PC-3 (cell line): ENCODE measurements at regions of chr18 and their contacts with region 1.

Region 1: GRCh38 chr18:70082430-70082829 is 123.1 kb downstream of the RTTN start:
- DNase-seq: no peak
- ATAC-seq: no peak
- H3K4me3 ChIP-seq: no peak overlapping the region
- H3K27ac ChIP-seq: no peak overlapping the region
- H3K4me1 ChIP-seq: no peaks in the 10 kb centered on the region
- H3K27me3 ChIP-seq: no peaks in the 10 kb centered on the region
- CTCF ChIP-seq: no peak

Region 2: GRCh38 chr18:68847219-68847837 is 1235.1 kb before region 1 on chr18:
- CTCF ChIA-PET with region 1: no interaction called
- POLR2A ChIA-PET with region 1: no interaction called
- intact Hi-C with region 1: loop called (anchors 1 kb)
- DNase-seq: peak; percentile 44
- ATAC-seq: no peak
- H3K4me3 ChIP-seq: no peak overlapping the region
- H3K27ac ChIP-seq: no peak overlapping the region
- H3K4me1 ChIP-seq: no peaks in the 10 kb centered on the region
- H3K27me3 ChIP-seq: no peaks in the 10 kb centered on the region
- CTCF ChIP-seq: peak; percentile 80

Region 3: GRCh38 chr18:68854786-68855391 is 1227.5 kb before region 1 on chr18:
- CTCF ChIA-PET with region 1: no interaction called
- POLR2A ChIA-PET with region 1: no interaction called
- intact Hi-C with region 1: loop called (anchors 2 kb)
- DNase-seq: no peak
- ATAC-seq: no peak
- H3K4me3 ChIP-seq: no peak overlapping the region
- H3K27ac ChIP-seq: no peak overlapping the region
- H3K4me1 ChIP-seq: no peaks in the 10 kb centered on the region
- H3K27me3 ChIP-seq: no peaks in the 10 kb centered on the region
- CTCF ChIP-seq: no peak

Region 4: GRCh38 chr18:69469444-69469919 is 612.9 kb before region 1 on chr18:
- CTCF ChIA-PET with region 1: interaction called, 3 read pairs
- POLR2A ChIA-PET with region 1: no interaction called
- intact Hi-C with region 1: loop called (anchors 2 kb)
- DNase-seq: peak; percentile 78
- ATAC-seq: peak; percentile 94
- H3K4me3 ChIP-seq: peak overlapping the region; percentile 59
- H3K27ac ChIP-seq: no peak overlapping the region
- H3K4me1 ChIP-seq: no peaks in the 10 kb centered on the region
- H3K27me3 ChIP-seq: no peaks in the 10 kb centered on the region
- CTCF ChIP-seq: peak; percentile 79

Region 5: DNA sequence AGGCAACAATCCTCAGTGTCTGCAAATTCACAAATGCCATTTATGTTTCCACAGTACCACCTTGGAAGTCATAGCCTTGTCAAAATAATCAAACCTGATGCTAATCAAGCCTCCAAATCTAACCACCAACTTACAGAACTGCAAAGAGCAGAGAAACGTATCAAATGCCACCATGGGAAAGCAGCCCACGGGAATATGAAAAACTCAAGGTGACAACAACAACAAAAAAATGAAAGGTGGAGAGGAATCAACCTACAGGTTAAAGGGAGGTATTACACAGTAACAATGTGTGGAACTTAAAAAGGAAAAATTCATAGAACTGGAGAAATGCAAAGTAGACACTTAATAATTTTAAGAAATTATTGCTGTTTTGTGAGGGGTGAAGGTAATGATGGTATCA is 181.5 kb before region 1 on chr18:
- CTCF ChIA-PET with region 1: no interaction called
- POLR2A ChIA-PET with region 1: no interaction called
- intact Hi-C with region 1: no loop called
- DNase-seq: no peak
- ATAC-seq: no peak
- H3K4me3 ChIP-seq: no peak overlapping the region
- H3K27ac ChIP-seq: no peak overlapping the region
- H3K4me1 ChIP-seq: no peaks in the 10 kb centered on the region
- H3K27me3 ChIP-seq: no peaks in the 10 kb centered on the region
- CTCF ChIP-seq: peak; percentile 37

Region 6: DNA sequence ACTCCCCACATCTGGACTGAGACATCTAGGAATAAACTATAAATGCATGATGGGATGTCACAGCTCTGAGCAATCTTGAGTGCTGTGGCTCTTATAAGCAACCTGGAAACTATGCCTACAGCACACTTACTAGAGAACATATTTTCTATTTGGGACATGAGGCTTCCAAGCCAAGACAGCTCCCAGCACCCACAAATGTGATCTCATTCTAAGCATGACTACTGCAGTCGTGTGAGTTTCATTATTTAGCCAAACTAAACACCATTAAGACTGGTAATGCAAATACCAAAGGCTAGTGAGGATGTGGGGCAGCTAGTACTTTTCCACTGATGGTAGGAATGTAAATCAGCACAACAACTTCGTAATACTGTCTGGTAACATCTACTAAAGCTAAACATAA is 50.6 kb after region 1 on chr18:
- CTCF ChIA-PET with region 1: no interaction called
- POLR2A ChIA-PET with region 1: no interaction called
- intact Hi-C with region 1: no loop called
- DNase-seq: peak; percentile 25
- ATAC-seq: peak; percentile 92
- H3K4me3 ChIP-seq: no peak overlapping the region
- H3K27ac ChIP-seq: no peak overlapping the region
- H3K4me1 ChIP-seq: 0 out of 2 replicates have a peak, but pooled peaks cover 9% of the 10 kb centered on the region
- H3K27me3 ChIP-seq: no peaks in the 10 kb centered on the region
- CTCF ChIP-seq: no peak

Region 7: GRCh38 chr18:70454704-70455322 is 372.4 kb after region 1 on chr18:
- CTCF ChIA-PET with region 1: interaction called, 5 read pairs
- POLR2A ChIA-PET with region 1: no interaction called
- intact Hi-C with region 1: loop called (anchors 5 kb)
- DNase-seq: peak; percentile 81
- ATAC-seq: peak; percentile 80
- H3K4me3 ChIP-seq: no peak overlapping the region
- H3K27ac ChIP-seq: no peak overlapping the region
- H3K4me1 ChIP-seq: no peaks in the 10 kb centered on the region
- H3K27me3 ChIP-seq: no peaks in the 10 kb centered on the region
- CTCF ChIP-seq: peak; percentile 90